Endothelial cell of umbilical vein (primary cell): ENCODE measurements at regions of chr11 and their contacts with region 1.

Region 1: GRCh38 chr11:132058211-132058772 is 687.9 kb downstream of the NTM start:
- DNase-seq: no peak
- H3K4me3 ChIP-seq: no peak overlapping the region
- H3K27ac ChIP-seq: no peak overlapping the region
- H3K4me1 ChIP-seq: peaks cover 21% of the 10 kb centered on the region
- H3K27me3 ChIP-seq: no peaks in the 10 kb centered on the region
- CTCF ChIP-seq: no peak
- POLR2A ChIP-seq: no peak

Region 2: GRCh38 chr11:131811383-131811782 is 246.9 kb before region 1 on chr11:
- CTCF ChIA-PET with region 1: no interaction called
- POLR2A ChIA-PET with region 1: no interaction called
- dilution Hi-C with region 1: no loop called
- intact Hi-C with region 1: no loop called
- DNase-seq: peak; percentile 61
- H3K4me3 ChIP-seq: no peak overlapping the region
- H3K27ac ChIP-seq: no peak overlapping the region
- H3K4me1 ChIP-seq: peaks cover 11% of the 10 kb centered on the region
- H3K27me3 ChIP-seq: peaks cover 0 to 9% of the 10 kb centered on the region in 2 experiments
- CTCF ChIP-seq: no peak
- POLR2A ChIP-seq: no peak

Region 3: GRCh38 chr11:132535830-132536229 is 477.5 kb after region 1 on chr11:
- CTCF ChIA-PET with region 1: no interaction called
- POLR2A ChIA-PET with region 1: no interaction called
- dilution Hi-C with region 1: no loop called
- intact Hi-C with region 1: no loop called
- DNase-seq: no peak
- H3K4me3 ChIP-seq: no peak overlapping the region
- H3K27ac ChIP-seq: no peak overlapping the region
- H3K4me1 ChIP-seq: no peaks in the 10 kb centered on the region
- H3K27me3 ChIP-seq: no peaks in the 10 kb centered on the region
- CTCF ChIP-seq: no peak
- POLR2A ChIP-seq: no peak

Region 4: DNA sequence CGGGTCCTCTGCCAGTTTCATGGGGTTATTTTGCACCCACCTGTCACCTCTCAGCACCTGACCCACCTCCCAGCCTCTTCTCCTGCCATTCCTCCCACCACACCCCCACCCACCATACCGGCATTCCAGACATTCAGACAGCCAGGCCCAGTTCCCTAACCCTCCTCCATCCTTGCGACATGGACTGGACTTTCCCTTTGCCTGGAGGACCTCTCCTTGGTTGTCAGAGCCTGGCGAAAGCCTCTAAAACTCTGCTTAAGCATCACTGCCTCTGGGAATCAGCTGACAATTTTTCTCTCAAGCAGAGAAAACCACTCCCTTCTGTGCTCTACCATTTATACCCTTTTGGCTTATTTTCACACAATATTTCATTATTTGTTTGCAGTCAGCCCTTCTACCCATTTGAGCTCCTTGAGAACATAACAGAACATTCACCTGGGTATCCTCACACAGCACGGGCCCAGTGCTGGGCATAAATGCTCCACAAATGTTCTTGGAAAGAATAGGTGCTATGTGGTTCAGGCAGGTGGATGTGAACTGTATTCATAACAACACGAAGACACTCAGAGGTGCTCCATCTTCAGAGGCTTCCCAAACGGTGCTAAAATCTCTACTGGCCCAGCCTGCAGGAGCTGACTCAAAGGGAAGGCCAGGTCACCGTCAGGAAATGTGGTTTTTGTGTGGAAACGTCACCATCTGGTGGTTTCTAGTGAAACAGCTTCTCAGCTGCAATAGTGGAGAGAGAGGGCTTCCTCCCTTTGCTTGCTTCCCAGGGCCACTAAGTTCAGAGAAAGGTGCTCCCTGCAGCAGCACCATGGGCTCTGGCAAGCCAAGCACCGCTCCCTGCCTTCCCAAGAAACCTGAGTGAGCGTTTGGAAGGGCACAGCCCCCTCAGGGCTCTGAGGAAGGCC is 1776.6 kb after region 1 on chr11:
- CTCF ChIA-PET with region 1: no interaction called
- POLR2A ChIA-PET with region 1: no interaction called
- dilution Hi-C with region 1: no loop called
- intact Hi-C with region 1: loop called (anchors 10 kb)
- DNase-seq: peak; percentile 43
- H3K4me3 ChIP-seq: no peak overlapping the region
- H3K27ac ChIP-seq: no peak overlapping the region
- H3K4me1 ChIP-seq: no peaks in the 10 kb centered on the region
- H3K27me3 ChIP-seq: no peaks in the 10 kb centered on the region
- CTCF ChIP-seq: peak; percentile 60
- POLR2A ChIP-seq: no peak